ENCODE measurements at regions of chr7 and their contacts with region 1.

Region 1: GRCh38 chr7:141737834-141738591 is at the start of gene SSBP1:
- DNase-seq: peak; percentile 72 to 95 (median 93)
- ATAC-seq: peak; percentile 94
- H3K4me3 ChIP-seq: peak within 1 kb of the TSS; percentile 84
- H3K4me3 Mint-ChIP-seq: peak within 1 kb of the TSS; percentile 92 to 100 (median 98)
- H3K27ac ChIP-seq: peak within 1 kb of the TSS; percentile 77
- H3K27ac Mint-ChIP-seq: peak within 1 kb of the TSS; percentile 95 to 99 (median 98)
- H3K4me1 ChIP-seq: peaks cover 21 to 22% of the 10 kb centered on the region in 2 donors
- H3K4me1 Mint-ChIP-seq: peaks cover 18 to 63% (median 56%) of the 10 kb centered on the region in 7 donors
- H3K27me3 ChIP-seq: no peaks in the 10 kb centered on the region
- H3K27me3 Mint-ChIP-seq: no peaks in the 10 kb centered on the region
- total RNA-seq, gene SSBP1: 86.4 to 148 (median 107) TPM

Region 2: GRCh38 chr7:140673063-140673773 is 1064.8 kb before region 1 on chr7:
- CTCF ChIA-PET with region 1: no interaction called
- POLR2A ChIA-PET with region 1: no interaction called
- intact Hi-C with region 1: loop called (anchors 1 to 5 kb)
- DNase-seq: peak; percentile 56 to 78 (median 75)
- ATAC-seq: peak; percentile 82
- H3K4me3 ChIP-seq: peak overlapping the region; percentile 82
- H3K4me3 Mint-ChIP-seq: peak overlapping the region; percentile 81 to 94 (median 89)
- H3K27ac ChIP-seq: peak overlapping the region; percentile 91
- H3K27ac Mint-ChIP-seq: peak overlapping the region; percentile 68 to 97 (median 88)
- H3K4me1 ChIP-seq: peaks cover 11 to 14% of the 10 kb centered on the region in 2 donors
- H3K4me1 Mint-ChIP-seq: peaks cover 16 to 42% (median 37%) of the 10 kb centered on the region in 7 donors
- H3K27me3 ChIP-seq: no peaks in the 10 kb centered on the region
- H3K27me3 Mint-ChIP-seq: peaks cover 0 to 7% (median 0%) of the 10 kb centered on the region in 5 donors

Region 3: DNA sequence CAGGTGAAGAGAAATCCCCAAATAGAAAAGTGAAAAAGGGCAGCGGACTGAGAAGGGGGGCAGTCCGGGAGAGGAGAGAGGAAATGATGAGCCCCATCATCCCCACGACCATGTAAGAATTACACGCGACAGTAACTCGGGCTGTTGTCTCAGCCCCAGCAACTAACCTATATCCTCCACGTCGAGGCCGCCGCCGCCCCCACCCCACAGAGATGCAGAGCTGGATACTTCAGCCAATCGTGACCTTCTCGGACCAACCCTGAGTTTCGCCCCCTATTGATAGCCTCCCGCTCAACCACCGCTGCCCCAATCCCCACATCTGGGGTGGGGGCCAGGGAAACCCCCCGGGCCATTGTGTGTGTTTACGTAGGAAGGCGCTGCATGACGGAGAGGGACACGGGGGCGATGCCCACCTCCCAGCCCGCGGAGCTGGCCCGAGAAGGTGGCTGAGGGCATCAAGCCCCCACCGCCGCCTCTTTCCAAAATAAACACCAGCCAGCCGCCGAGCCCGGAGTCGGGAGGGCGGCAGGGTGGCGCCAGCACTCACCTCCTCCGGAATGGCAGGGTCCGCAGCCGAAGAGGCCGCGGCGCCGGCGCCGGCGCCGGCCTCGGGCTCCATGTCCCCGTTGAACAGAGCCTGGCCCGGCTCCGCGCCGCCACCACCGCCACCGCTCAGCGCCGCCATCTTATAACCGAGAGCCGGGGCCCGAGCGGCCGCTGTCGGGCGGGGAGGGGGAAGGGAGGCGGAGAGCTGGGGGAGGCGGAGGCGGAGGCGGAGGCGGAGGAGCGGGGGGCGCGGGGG is 813.8 kb before region 1 on chr7:
- CTCF ChIA-PET with region 1: no interaction called
- POLR2A ChIA-PET with region 1: interaction called, 3 read pairs
- intact Hi-C with region 1: loop called (anchors 1 to 2 kb)
- DNase-seq: peak; percentile 61 to 89 (median 70)
- ATAC-seq: peak; percentile 84
- H3K4me3 ChIP-seq: peak overlapping the region; percentile 85
- H3K4me3 Mint-ChIP-seq: peak overlapping the region in 1 of 10 donors; percentile 89
- H3K27ac ChIP-seq: peak overlapping the region; percentile 100
- H3K27ac Mint-ChIP-seq: peak overlapping the region in 3 of 9 donors; percentile 92 to 99 (median 94)
- H3K4me1 ChIP-seq: peaks cover 9 to 18% of the 10 kb centered on the region in 2 donors
- H3K4me1 Mint-ChIP-seq: peaks cover 10 to 44% (median 22%) of the 10 kb centered on the region in 7 donors
- H3K27me3 ChIP-seq: no peaks in the 10 kb centered on the region
- H3K27me3 Mint-ChIP-seq: peaks cover 0 to 5% (median 0%) of the 10 kb centered on the region in 5 donors

Region 4: DNA sequence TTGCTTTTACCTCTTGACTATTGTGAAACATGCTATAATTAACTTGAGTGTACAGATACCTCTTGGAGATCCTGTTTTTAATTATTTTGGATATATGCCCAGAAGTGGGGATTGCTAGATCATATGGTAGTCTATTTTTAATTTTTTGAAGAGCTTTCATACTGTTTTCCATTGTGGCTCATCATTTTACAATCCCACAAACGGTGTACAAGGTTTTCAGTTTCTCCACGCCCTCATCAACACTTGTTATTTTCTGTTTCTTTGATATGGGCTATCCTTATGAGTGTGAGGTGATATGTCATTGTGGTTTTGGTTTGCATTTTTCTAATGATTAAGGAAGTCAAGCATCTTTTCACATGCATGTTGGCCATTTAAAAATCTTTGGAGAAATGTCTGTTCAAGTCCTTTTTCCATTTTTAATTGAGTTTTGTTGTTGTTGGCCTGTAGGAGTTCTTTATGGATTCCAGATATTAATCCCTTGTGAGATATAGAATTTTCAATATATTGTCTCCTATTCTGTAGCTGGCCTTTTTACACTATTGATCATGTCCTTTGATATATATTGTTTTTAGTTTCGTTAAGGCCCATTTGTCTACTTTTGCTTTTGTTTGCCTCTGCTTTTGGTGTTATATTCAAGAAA is 179.3 kb before region 1 on chr7:
- CTCF ChIA-PET with region 1: no interaction called
- POLR2A ChIA-PET with region 1: no interaction called
- intact Hi-C with region 1: loop called in 1 of 2 experiments (anchors 2 kb)
- DNase-seq: no peak
- ATAC-seq: peak; percentile 80
- H3K4me3 ChIP-seq: no peak overlapping the region
- H3K4me3 Mint-ChIP-seq: peak overlapping the region in 2 of 10 donors; percentile 11 to 71
- H3K27ac ChIP-seq: no peak overlapping the region
- H3K27ac Mint-ChIP-seq: peak overlapping the region in 3 of 9 donors; percentile 3 to 96 (median 6)
- H3K4me1 ChIP-seq: peaks cover 0 to 25% of the 10 kb centered on the region in 2 donors
- H3K4me1 Mint-ChIP-seq: peaks cover 18 to 68% (median 34%) of the 10 kb centered on the region in 7 donors
- H3K27me3 ChIP-seq: no peaks in the 10 kb centered on the region
- H3K27me3 Mint-ChIP-seq: no peaks in the 10 kb centered on the region

Region 5: DNA sequence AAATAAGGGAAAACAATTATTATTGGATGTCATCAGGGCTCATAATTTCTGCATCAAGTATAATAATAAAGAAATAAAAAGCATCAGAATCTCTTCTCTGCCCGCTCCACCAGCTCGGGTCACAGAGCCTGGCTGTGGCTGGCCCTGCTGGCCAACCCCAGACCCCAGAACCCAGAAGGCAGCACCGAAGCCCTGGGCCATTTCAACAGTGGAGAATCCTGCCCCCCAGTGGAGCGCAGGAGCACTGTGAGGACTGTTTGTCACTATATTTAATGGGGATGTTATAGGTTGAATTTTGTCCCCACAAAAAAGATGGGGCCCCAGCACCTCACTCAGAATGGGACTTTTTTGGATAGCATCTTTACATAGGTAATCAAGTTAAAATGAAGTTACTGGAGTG is 63.3 kb before region 1 on chr7:
- CTCF ChIA-PET with region 1: interaction called, 5 read pairs
- POLR2A ChIA-PET with region 1: interaction called, 3 read pairs
- intact Hi-C with region 1: loop called in 1 of 2 experiments (anchors 2 kb)
- DNase-seq: no peak
- ATAC-seq: peak; percentile 37
- H3K4me3 ChIP-seq: no peak overlapping the region
- H3K4me3 Mint-ChIP-seq: peak overlapping the region in 1 of 10 donors; percentile 46
- H3K27ac ChIP-seq: no peak overlapping the region
- H3K27ac Mint-ChIP-seq: peak overlapping the region in 5 of 9 donors; percentile 12 to 87 (median 51)
- H3K4me1 ChIP-seq: no peaks in the 10 kb centered on the region
- H3K4me1 Mint-ChIP-seq: peaks cover 0 to 45% (median 0%) of the 10 kb centered on the region in 7 donors
- H3K27me3 ChIP-seq: no peaks in the 10 kb centered on the region
- H3K27me3 Mint-ChIP-seq: no peaks in the 10 kb centered on the region

Region 6: GRCh38 chr7:141754939-141755338 is 16.9 kb after region 1 on chr7:
- CTCF ChIA-PET with region 1: no interaction called
- POLR2A ChIA-PET with region 1: no interaction called
- intact Hi-C with region 1: loop called in 1 of 2 experiments (anchors 1 kb)
- DNase-seq: peak in 4 of 9 donors; percentile 11 to 19 (median 16)
- ATAC-seq: peak; percentile 58
- H3K4me3 ChIP-seq: no peak overlapping the region
- H3K4me3 Mint-ChIP-seq: no peak overlapping the region
- H3K27ac ChIP-seq: no peak overlapping the region
- H3K27ac Mint-ChIP-seq: no peak overlapping the region
- H3K4me1 ChIP-seq: no peaks in the 10 kb centered on the region
- H3K4me1 Mint-ChIP-seq: peaks cover 0 to 21% (median 12%) of the 10 kb centered on the region in 7 donors
- H3K27me3 ChIP-seq: no peaks in the 10 kb centered on the region
- H3K27me3 Mint-ChIP-seq: no peaks in the 10 kb centered on the region

Region 7: GRCh38 chr7:141776374-141776773 is 38.4 kb after region 1 on chr7 and contains the start of gene TAS2R4:
- CTCF ChIA-PET with region 1: no interaction called
- POLR2A ChIA-PET with region 1: no interaction called
- intact Hi-C with region 1: no loop called
- DNase-seq: no peak
- ATAC-seq: no peak
- H3K4me3 ChIP-seq: no peak within 1 kb of the TSS
- H3K4me3 Mint-ChIP-seq: no peak within 1 kb of the TSS
- H3K27ac ChIP-seq: no peak within 1 kb of the TSS
- H3K27ac Mint-ChIP-seq: no peak within 1 kb of the TSS
- H3K4me1 ChIP-seq: no peaks in the 10 kb centered on the region
- H3K4me1 Mint-ChIP-seq: peaks cover 0 to 18% (median 5%) of the 10 kb centered on the region in 7 donors
- H3K27me3 ChIP-seq: no peaks in the 10 kb centered on the region
- H3K27me3 Mint-ChIP-seq: no peaks in the 10 kb centered on the region
- total RNA-seq, gene TAS2R4: 0.83 to 6.3 (median 1.5) TPM

Region 8: GRCh38 chr7:143287935-143288826 is 1550.2 kb after region 1 on chr7 and contains the start of gene CASP2:
- CTCF ChIA-PET with region 1: no interaction called
- POLR2A ChIA-PET with region 1: no interaction called
- intact Hi-C with region 1: loop called in 1 of 2 experiments (anchors 1 kb)
- DNase-seq: peak; percentile 98 to 99 (median 99)
- ATAC-seq: peak; percentile 97
- H3K4me3 ChIP-seq: peak within 1 kb of the TSS; percentile 92
- H3K4me3 Mint-ChIP-seq: peak within 1 kb of the TSS; percentile 88 to 99 (median 95)
- H3K27ac ChIP-seq: peak within 1 kb of the TSS; percentile 85
- H3K27ac Mint-ChIP-seq: peak within 1 kb of the TSS; percentile 86 to 95 (median 93)
- H3K4me1 ChIP-seq: peaks cover 13 to 35% of the 10 kb centered on the region in 2 donors
- H3K4me1 Mint-ChIP-seq: peaks cover 41 to 66% (median 59%) of the 10 kb centered on the region in 7 donors
- H3K27me3 ChIP-seq: no peaks in the 10 kb centered on the region
- H3K27me3 Mint-ChIP-seq: no peaks in the 10 kb centered on the region
- total RNA-seq, gene CASP2: 29.6 to 97.7 (median 69.1) TPM